GM18951 (cell line): ENCODE measurements at regions of chr19 and their contacts with region 1.

Region 1: GRCh38 chr19:49391581-49392399 is 3.7 kb downstream of the KASH5 start:
- POLR2A ChIP-seq: no peak

Region 2: GRCh38 chr19:49443366-49444099 is 51.7 kb after region 1 on chr19:
- in situ Hi-C with region 1: loop called (anchors 10 kb)
- POLR2A ChIP-seq: no peak